CD4-positive, alpha-beta memory T cell (primary cell): ENCODE measurements at regions of chr1 and their contacts with region 1.

Region 1: GRCh38 chr1:198713081-198713480 is 74.2 kb downstream of the PTPRC start:
- DNase-seq: no peak
- H3K4me3 ChIP-seq: no peak overlapping the region
- H3K4me3 Mint-ChIP-seq: peak overlapping the region in 2 of 8 donors; percentile 7 to 11
- H3K27ac ChIP-seq: peak overlapping the region; percentile 24
- H3K27ac Mint-ChIP-seq: peak overlapping the region in 6 of 7 donors; percentile 18 to 78 (median 58)
- H3K4me1 ChIP-seq: peaks cover 64% of the 10 kb centered on the region
- H3K4me1 Mint-ChIP-seq: peaks cover 32 to 71% (median 43%) of the 10 kb centered on the region in 4 donors
- H3K27me3 ChIP-seq: no peaks in the 10 kb centered on the region
- H3K27me3 Mint-ChIP-seq: no peaks in the 10 kb centered on the region

Region 2: DNA sequence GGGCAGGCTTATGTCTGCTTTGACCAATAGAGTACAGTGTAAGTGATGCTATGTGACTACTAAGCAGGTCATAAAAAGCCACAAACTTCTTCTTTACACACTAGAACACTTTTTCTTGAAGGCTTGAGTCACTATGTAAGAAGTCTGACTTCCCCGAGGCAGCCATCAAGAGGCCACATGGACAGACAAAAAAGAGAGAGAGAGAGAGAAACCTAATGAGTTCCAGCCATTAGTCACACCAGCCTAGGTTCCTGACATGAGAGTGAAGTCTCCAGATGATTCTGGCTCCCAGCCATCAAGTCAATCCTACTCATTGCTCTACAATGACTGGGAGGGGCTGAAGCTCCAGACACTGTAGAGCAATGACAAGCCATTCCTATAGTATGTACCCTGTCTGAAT is 694.6 kb before region 1 on chr1:
- CTCF ChIA-PET with region 1: no interaction called
- POLR2A ChIA-PET with region 1: no interaction called
- intact Hi-C with region 1: no loop called
- DNase-seq: no peak
- H3K4me3 ChIP-seq: no peak overlapping the region
- H3K4me3 Mint-ChIP-seq: no peak overlapping the region
- H3K27ac ChIP-seq: no peak overlapping the region
- H3K27ac Mint-ChIP-seq: no peak overlapping the region
- H3K4me1 ChIP-seq: no peaks in the 10 kb centered on the region
- H3K4me1 Mint-ChIP-seq: no peaks in the 10 kb centered on the region
- H3K27me3 ChIP-seq: no peaks in the 10 kb centered on the region
- H3K27me3 Mint-ChIP-seq: peaks cover 4 to 6% of the 10 kb centered on the region in 2 donors

Region 3: DNA sequence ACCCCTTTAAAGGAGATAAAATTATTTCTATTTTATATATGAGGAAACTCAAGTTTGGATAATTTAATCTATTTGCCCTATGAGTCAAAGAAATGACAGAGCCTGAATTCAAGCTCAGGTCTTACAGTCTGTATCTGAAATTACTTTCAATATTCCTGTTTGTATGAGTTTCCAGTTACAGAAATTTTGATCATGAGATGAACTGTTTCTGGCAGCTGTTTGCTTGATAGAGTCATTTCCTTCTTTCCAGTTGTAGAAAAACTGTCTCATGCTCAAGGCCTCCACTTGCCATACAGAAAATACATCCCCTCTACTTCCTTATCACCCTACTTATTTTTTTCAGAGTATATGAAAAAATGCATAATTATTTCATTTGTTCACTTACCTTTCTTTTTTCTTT is 13.4 kb after region 1 on chr1:
- CTCF ChIA-PET with region 1: no interaction called
- POLR2A ChIA-PET with region 1: interaction called, 4 read pairs
- intact Hi-C with region 1: loop called (anchors 1 kb)
- DNase-seq: no peak
- H3K4me3 ChIP-seq: no peak overlapping the region
- H3K4me3 Mint-ChIP-seq: peak overlapping the region in 1 of 8 donors; percentile 38
- H3K27ac ChIP-seq: no peak overlapping the region
- H3K27ac Mint-ChIP-seq: peak overlapping the region in 6 of 7 donors; percentile 42 to 77 (median 60)
- H3K4me1 ChIP-seq: peaks cover 51% of the 10 kb centered on the region
- H3K4me1 Mint-ChIP-seq: peaks cover 37 to 69% (median 49%) of the 10 kb centered on the region in 4 donors
- H3K27me3 ChIP-seq: no peaks in the 10 kb centered on the region
- H3K27me3 Mint-ChIP-seq: no peaks in the 10 kb centered on the region

Region 4: GRCh38 chr1:198734323-198735008 is 21.4 kb after region 1 on chr1:
- CTCF ChIA-PET with region 1: no interaction called
- POLR2A ChIA-PET with region 1: interaction called, 3 read pairs
- intact Hi-C with region 1: loop called (anchors 2 kb)
- DNase-seq: no peak
- H3K4me3 ChIP-seq: no peak overlapping the region
- H3K4me3 Mint-ChIP-seq: peak overlapping the region in 1 of 8 donors; percentile 30
- H3K27ac ChIP-seq: no peak overlapping the region
- H3K27ac Mint-ChIP-seq: peak overlapping the region in 5 of 7 donors; percentile 2 to 77 (median 25)
- H3K4me1 ChIP-seq: peaks cover 60% of the 10 kb centered on the region
- H3K4me1 Mint-ChIP-seq: peaks cover 51 to 78% (median 61%) of the 10 kb centered on the region in 4 donors
- H3K27me3 ChIP-seq: no peaks in the 10 kb centered on the region
- H3K27me3 Mint-ChIP-seq: no peaks in the 10 kb centered on the region

Region 5: DNA sequence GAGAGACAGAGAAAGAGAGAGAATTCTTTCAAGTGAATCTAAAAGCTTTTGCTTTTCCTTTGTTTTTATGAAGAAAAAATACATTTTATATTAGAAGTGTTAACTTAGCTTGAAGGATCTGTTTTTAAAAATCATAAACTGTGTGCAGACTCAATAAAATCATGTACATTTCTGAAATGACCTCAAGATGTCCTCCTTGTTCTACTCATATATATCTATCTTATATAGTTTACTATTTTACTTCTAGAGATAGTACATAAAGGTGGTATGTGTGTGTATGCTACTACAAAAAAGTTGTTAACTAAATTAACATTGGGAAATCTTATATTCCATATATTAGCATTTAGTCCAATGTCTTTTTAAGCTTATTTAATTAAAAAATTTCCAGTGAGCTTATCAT is 43.4 kb after region 1 on chr1:
- CTCF ChIA-PET with region 1: interaction called, 3 read pairs
- POLR2A ChIA-PET with region 1: no interaction called
- intact Hi-C with region 1: loop called (anchors 5 kb)
- DNase-seq: no peak
- H3K4me3 ChIP-seq: no peak overlapping the region
- H3K4me3 Mint-ChIP-seq: no peak overlapping the region
- H3K27ac ChIP-seq: no peak overlapping the region
- H3K27ac Mint-ChIP-seq: peak overlapping the region in 2 of 7 donors; percentile 59 to 70
- H3K4me1 ChIP-seq: peaks cover 11% of the 10 kb centered on the region
- H3K4me1 Mint-ChIP-seq: peaks cover 8 to 26% (median 20%) of the 10 kb centered on the region in 4 donors
- H3K27me3 ChIP-seq: no peaks in the 10 kb centered on the region
- H3K27me3 Mint-ChIP-seq: no peaks in the 10 kb centered on the region

Region 6: DNA sequence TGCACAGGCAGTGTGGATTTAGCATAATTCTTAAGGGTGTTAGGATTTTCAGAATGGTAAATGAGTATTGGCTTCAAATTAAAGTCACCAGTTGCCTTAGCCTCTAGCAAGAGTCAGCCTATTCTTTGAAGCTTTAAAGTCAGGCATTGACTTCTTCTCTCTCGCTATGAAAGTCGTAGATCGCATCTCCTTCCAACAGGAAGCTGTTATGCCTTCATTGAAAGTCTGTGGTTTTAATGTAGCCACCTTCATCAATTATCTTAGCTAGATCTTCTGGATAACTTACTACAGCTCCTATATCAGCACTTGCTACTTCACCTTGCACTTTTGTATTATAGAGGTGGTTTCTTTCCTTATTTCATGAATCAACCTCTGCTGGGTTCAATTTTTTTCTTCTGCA is 246.0 kb after region 1 on chr1:
- CTCF ChIA-PET with region 1: no interaction called
- POLR2A ChIA-PET with region 1: no interaction called
- intact Hi-C with region 1: no loop called
- DNase-seq: peak in 4 of 5 donors; percentile 14 to 38 (median 23)
- H3K4me3 ChIP-seq: no peak overlapping the region
- H3K4me3 Mint-ChIP-seq: peak overlapping the region in 1 of 8 donors; percentile 4
- H3K27ac ChIP-seq: no peak overlapping the region
- H3K27ac Mint-ChIP-seq: peak overlapping the region in 2 of 7 donors; percentile 34 to 48
- H3K4me1 ChIP-seq: peaks cover 26% of the 10 kb centered on the region
- H3K4me1 Mint-ChIP-seq: peaks cover 22 to 34% (median 28%) of the 10 kb centered on the region in 4 donors
- H3K27me3 ChIP-seq: no peaks in the 10 kb centered on the region
- H3K27me3 Mint-ChIP-seq: no peaks in the 10 kb centered on the region